ENCODE measurements at regions of chr11 and their contacts with region 1.

Region 1: GRCh38 chr11:33829433-33830141 is 55.3 kb upstream of the FBXO3 start:
- DNase-seq: peak; percentile 40 to 61
- ATAC-seq: peak; percentile 78 to 97 (median 87)
- H3K4me3 ChIP-seq: peak overlapping the region; percentile 67
- H3K27ac ChIP-seq: no peak overlapping the region
- H3K4me1 ChIP-seq: no peaks in the 10 kb centered on the region
- H3K27me3 ChIP-seq: peaks cover 0 to 13% (median 5%) of the 10 kb centered on the region in 3 donors
- CTCF ChIP-seq: peak; percentile 85

Region 2: DNA sequence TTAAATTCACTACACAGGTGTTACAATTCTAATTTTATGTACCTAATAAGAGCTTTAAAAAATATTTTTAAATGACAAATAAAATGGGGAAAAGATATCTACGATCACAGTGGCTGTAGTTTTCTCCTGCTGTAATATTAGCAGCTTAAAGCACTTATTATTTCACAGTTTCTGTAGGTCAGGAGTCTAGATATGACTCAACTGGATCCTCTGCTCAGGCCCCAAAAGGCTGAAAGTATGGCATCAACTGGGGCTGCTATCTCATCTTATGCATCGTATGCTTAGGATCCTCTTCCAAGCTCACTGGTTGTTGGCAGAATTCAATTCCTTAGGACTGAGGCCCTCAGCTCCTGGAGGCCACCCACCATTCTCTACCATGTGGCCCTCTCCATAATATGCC is 68.1 kb before region 1 on chr11:
- intact Hi-C with region 1: no loop called
- DNase-seq: no peak
- ATAC-seq: no peak
- H3K4me3 ChIP-seq: no peak overlapping the region
- H3K27ac ChIP-seq: no peak overlapping the region
- H3K4me1 ChIP-seq: no peaks in the 10 kb centered on the region
- H3K27me3 ChIP-seq: no peaks in the 10 kb centered on the region
- CTCF ChIP-seq: no peak

Region 3: GRCh38 chr11:33808228-33808828 is 21.3 kb before region 1 on chr11:
- intact Hi-C with region 1: loop called (anchors 1 kb)
- DNase-seq: peak; percentile 81 to 89
- ATAC-seq: peak; percentile 90 to 96 (median 92)
- H3K4me3 ChIP-seq: no peak overlapping the region
- H3K27ac ChIP-seq: no peak overlapping the region
- H3K4me1 ChIP-seq: peaks cover 3% of the 10 kb centered on the region
- H3K27me3 ChIP-seq: no peaks in the 10 kb centered on the region
- CTCF ChIP-seq: peak; percentile 93

Measured in psoas muscle (tissue), 8 donors.